ENCODE measurements at regions of chr11 and their contacts with region 1.

Region 1: DNA sequence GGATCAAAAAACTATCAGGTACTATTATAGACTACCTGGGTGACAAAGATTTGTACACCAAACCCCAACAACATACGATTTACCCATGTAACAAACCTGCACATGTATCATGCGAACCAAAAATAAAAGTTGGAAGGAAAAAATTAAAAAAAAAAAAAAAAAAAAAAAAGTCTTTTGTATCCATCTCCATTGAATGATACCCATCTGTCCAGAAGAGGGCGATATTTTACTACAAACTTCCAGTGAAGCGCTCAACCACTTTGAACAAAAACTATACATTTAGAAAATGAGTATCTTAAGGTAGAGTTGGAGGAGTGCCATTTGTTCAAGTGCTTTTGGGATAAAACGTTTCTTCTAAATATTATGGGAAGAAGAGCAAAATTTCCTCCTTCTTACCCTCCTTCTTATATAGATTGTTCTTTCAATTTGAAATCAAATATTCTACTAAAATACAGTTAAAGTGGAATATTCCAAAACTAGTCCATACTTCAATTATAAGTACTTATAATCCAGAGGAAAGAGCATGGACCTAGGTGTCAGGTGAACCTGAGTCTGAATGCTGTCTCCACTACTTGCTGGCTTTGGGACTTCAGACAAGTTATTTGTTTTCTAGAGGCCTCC is 23.3 kb downstream of the ARL14EP start:
- DNase-seq: no peak
- H3K4me3 ChIP-seq: no peak overlapping the region
- H3K27ac ChIP-seq: no peak overlapping the region
- H3K4me1 ChIP-seq: no peaks in the 10 kb centered on the region
- H3K27me3 ChIP-seq: no peaks in the 10 kb centered on the region
- CTCF ChIP-seq: peak in 2 of 3 experiments; percentile 59 to 66
- POLR2A ChIP-seq: no peak

Region 2: DNA sequence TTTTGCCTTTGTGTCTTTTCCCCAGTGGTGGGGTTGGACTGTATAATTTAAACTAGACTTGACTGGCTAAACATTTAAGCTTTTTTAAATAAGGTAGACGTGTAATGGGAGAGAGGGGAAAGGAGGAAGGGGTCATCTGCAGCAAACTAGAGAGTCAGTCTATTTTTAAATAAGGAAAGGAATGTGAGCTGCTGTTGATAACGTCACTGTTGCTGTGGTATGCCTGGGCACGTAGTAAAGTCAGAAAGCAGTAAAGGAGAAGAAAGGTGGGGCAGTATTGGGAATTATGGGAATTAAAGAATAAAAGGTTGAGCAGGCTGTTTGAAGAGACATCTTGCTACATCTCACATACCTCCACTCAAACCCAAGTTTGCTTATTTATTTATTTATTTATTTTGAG is 195.8 kb before region 1 on chr11:
- intact Hi-C with region 1: no loop called
- DNase-seq: no peak
- H3K4me3 ChIP-seq: no peak overlapping the region
- H3K27ac ChIP-seq: no peak overlapping the region
- H3K4me1 ChIP-seq: no peaks in the 10 kb centered on the region
- H3K27me3 ChIP-seq: no peaks in the 10 kb centered on the region
- CTCF ChIP-seq: no peak
- POLR2A ChIP-seq: no peak

Region 3: DNA sequence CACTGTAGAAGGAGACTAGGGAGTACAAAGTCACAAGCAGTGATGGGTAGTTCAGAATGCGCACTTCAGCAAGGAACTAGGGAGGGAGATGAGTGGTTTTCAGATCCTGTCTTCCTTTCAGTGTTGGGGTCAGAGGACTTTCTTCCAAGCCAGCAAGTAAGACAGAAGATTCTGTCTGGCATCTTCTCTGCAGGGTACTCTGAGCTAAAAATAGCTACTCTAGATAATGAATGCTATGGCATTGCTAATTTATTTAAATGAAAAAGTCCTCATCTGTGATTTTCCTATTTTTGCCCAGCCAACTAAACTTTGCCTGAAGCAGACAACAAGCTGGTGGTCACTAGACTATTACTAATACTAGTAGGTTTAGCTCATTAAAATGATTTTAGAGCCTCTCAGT is 41.6 kb before region 1 on chr11:
- intact Hi-C with region 1: no loop called
- DNase-seq: no peak
- H3K4me3 ChIP-seq: no peak overlapping the region
- H3K27ac ChIP-seq: no peak overlapping the region
- H3K4me1 ChIP-seq: no peaks in the 10 kb centered on the region
- H3K27me3 ChIP-seq: no peaks in the 10 kb centered on the region
- CTCF ChIP-seq: no peak
- POLR2A ChIP-seq: no peak

Region 4: DNA sequence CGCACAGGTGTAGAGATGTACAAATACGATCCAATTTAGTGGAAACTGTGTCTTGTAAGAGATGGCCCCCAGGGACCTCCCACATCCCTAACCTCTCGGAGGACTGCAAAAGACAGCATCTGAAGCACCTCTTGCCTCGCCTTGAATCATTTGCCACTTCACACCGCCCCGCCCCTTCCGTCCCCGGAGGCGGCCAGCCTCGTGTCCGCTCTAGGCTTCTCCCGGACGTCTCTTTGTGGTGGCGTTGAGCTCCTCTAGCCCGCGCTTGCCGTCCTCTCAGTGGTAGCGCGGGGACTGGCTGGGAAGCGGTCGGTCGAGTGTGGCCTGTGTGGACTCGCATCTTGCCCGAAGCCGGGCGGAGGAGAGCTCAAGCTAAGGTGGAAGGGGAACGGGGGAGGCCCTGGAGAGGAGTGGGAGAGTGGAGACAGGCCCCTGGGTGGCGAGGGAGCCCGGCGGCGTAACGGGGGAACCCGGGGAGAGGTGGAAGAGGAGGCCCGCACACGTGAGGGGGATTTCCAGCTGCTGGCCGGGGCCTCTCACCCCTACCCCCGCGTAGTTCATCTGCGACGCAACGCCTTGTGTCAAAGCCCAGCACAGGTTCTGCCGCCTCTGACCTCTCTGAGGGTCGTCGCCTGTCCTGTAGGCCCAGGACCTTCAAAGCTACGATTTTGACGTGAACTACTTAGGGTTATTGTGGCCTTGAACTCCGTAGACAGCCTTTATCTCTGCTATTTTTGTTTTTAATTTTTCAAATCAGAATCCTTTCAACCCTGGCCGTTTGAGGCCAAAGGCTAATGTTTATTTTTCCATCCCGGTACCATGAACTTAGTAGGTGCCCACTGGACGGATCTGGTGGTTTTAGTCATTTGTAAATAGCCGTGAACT is 23.1 kb before region 1 on chr11 and contains the start of gene ARL14EP:
- intact Hi-C with region 1: no loop called
- DNase-seq: peak; percentile 95 to 96
- H3K4me3 ChIP-seq: peak within 1 kb of the TSS; percentile 54 to 91
- H3K27ac ChIP-seq: peak within 1 kb of the TSS; percentile 55
- H3K4me1 ChIP-seq: peaks cover 37% of the 10 kb centered on the region
- H3K27me3 ChIP-seq: no peaks in the 10 kb centered on the region
- CTCF ChIP-seq: no peak
- POLR2A ChIP-seq: peak in 1 of 2 donors; percentile 59
- total RNA-seq, gene ARL14EP: 15.7 TPM

Region 5: GRCh38 chr11:30917859-30918478 is 571.8 kb after region 1 on chr11:
- intact Hi-C with region 1: loop called (anchors 10 kb)
- DNase-seq: no peak
- H3K4me3 ChIP-seq: no peak overlapping the region
- H3K27ac ChIP-seq: no peak overlapping the region
- H3K4me1 ChIP-seq: no peaks in the 10 kb centered on the region
- H3K27me3 ChIP-seq: no peaks in the 10 kb centered on the region
- CTCF ChIP-seq: peak; percentile 28 to 50 (median 31)
- POLR2A ChIP-seq: no peak

Measured in vagina (tissue), 2 donors.